Psoas muscle (tissue), 8 donors: ENCODE measurements at regions of chr6 and their contacts with region 1.

Region 1: DNA sequence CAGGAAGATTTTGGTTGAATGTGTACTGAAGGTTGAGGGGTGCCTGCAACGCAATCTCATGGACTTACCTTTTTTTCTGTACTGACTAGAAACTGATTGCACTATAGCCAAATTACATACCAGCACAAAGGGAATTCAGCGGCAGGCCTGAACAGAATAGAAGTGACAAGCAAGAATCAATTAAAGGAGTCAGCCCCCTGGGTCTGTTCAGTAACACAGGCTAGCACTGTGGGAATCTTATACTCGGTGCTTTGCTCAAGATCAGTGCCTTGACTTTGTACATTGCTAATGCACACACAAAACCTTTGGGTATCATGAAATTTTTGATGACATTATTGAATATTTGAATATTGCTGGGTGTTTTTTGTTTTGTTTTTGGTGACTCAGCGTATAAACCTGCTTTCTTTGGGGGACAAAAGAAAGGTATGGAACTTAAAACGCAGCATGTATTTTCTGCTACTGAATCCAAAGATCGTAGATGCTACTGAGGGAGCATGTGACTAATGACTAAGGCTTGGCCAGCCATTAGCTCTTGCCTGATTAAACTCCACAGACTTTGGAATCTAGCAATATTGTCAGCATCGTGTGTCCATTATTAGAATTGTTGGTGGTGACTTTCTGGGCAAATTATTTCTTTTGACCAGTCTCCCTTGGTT is 236.6 kb downstream of the ARID1B start:
- DNase-seq: no peak
- ATAC-seq: peak in 2 of 4 donors; percentile 44 to 51
- H3K4me3 ChIP-seq: no peak overlapping the region
- H3K27ac ChIP-seq: peak overlapping the region; percentile 3
- H3K4me1 ChIP-seq: peaks cover 39% of the 10 kb centered on the region
- H3K27me3 ChIP-seq: no peaks in the 10 kb centered on the region
- CTCF ChIP-seq: no peak

Region 2: GRCh38 chr6:156961282-156961892 is 52.4 kb before region 1 on chr6:
- intact Hi-C with region 1: loop called (anchors 2 to 5 kb)
- DNase-seq: no peak
- ATAC-seq: no peak
- H3K4me3 ChIP-seq: no peak overlapping the region
- H3K27ac ChIP-seq: no peak overlapping the region
- H3K4me1 ChIP-seq: peaks cover 63% of the 10 kb centered on the region
- H3K27me3 ChIP-seq: no peaks in the 10 kb centered on the region
- CTCF ChIP-seq: no peak

Region 3: GRCh38 chr6:156969233-156969632 is 44.5 kb before region 1 on chr6:
- intact Hi-C with region 1: loop called in 1 of 2 experiments (anchors 5 kb)
- DNase-seq: no peak
- ATAC-seq: no peak
- H3K4me3 ChIP-seq: no peak overlapping the region
- H3K27ac ChIP-seq: peak overlapping the region; percentile 0
- H3K4me1 ChIP-seq: peaks cover 79% of the 10 kb centered on the region
- H3K27me3 ChIP-seq: no peaks in the 10 kb centered on the region
- CTCF ChIP-seq: no peak

Region 4: GRCh38 chr6:156976216-156977127 is 37.3 kb before region 1 on chr6:
- intact Hi-C with region 1: loop called (anchors 5 kb)
- DNase-seq: no peak
- ATAC-seq: peak in 3 of 4 donors; percentile 39 to 52 (median 48)
- H3K4me3 ChIP-seq: peak overlapping the region; percentile 58
- H3K27ac ChIP-seq: peak overlapping the region; percentile 61
- H3K4me1 ChIP-seq: peaks cover 78% of the 10 kb centered on the region
- H3K27me3 ChIP-seq: no peaks in the 10 kb centered on the region
- CTCF ChIP-seq: no peak

Region 5: GRCh38 chr6:157535339-157536222 is 521.8 kb after region 1 on chr6:
- intact Hi-C with region 1: no loop called
- DNase-seq: no peak
- ATAC-seq: no peak
- H3K4me3 ChIP-seq: no peak overlapping the region
- H3K27ac ChIP-seq: peak overlapping the region; percentile 20
- H3K4me1 ChIP-seq: peaks cover 65% of the 10 kb centered on the region
- H3K27me3 ChIP-seq: no peaks in the 10 kb centered on the region
- CTCF ChIP-seq: no peak